PC-9 (cell line): ENCODE measurements at regions of chr20 and their contacts with region 1.

Region 1: GRCh38 chr20:37943501-37944455 is 40.9 kb downstream of the VSTM2L start:
- DNase-seq: no peak
- H3K4me3 ChIP-seq: no peak overlapping the region
- H3K27ac ChIP-seq: no peak overlapping the region
- H3K4me1 ChIP-seq: no peaks in the 10 kb centered on the region
- H3K27me3 ChIP-seq: peaks cover 36% of the 10 kb centered on the region
- CTCF ChIP-seq: no peak

Region 2: DNA sequence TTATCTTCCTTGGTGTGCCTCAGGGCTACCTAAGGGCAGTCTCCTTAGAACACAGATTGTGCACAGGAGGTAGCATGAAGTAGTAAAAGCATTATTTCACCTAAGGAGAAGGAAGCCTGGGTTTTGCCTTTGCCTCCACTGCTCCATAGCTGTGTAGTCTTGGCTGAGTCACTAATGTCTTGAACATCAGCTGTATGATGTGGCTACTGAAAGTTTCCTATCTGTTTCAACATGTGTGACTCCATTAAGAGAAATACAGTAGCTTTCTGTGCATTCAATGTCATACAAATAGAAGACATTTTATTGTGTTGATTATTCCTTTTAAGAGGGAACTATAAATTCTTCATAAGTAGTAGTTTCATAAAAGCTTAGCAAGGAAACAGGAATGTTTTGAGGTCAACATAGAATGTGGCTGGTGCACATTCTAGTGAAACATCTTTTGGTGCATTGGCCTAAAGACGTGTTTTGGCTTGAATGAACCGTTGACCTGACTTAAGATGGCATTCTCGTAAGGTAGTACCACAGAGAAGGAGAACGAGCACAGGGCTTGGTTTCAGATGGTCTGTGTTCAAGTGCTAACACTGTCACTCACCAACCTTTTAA is 179.3 kb before region 1 on chr20:
- CTCF ChIA-PET with region 1: no interaction called
- POLR2A ChIA-PET with region 1: no interaction called
- intact Hi-C with region 1: no loop called
- DNase-seq: no peak
- H3K4me3 ChIP-seq: no peak overlapping the region
- H3K27ac ChIP-seq: no peak overlapping the region
- H3K4me1 ChIP-seq: no peaks in the 10 kb centered on the region
- H3K27me3 ChIP-seq: no peaks in the 10 kb centered on the region
- CTCF ChIP-seq: no peak

Region 3: DNA sequence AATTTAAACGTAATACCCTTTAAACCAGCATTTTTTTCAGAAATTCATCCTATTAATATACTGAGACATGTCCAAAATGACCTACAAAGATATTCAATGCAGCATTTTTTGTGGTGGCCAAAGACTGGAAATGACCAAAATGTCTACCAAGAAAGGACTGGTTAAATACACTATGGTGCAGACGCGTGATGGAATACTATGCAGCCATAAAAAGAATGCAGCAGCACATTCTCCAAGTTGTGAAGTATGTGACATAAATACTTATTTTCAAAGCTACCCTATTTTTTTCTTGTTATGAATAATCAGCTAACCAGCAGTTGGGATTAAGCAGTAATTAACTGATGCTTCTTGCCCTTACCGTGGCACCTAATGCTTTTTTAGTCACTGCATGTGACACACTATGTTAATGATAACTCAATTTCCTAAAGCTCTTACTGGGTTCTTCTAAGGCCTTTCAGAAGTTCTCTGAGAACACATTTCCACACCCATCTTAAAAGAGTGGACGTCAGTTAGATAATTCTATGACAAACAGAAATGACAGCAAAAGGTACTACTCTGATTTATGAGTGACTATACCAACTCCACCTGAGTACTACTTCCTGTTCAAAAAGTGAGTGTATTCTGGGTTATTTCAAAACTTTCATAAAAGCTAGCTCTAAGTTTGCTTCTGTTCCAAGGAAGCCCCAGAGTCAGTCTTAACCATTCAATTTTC is 64.6 kb after region 1 on chr20:
- CTCF ChIA-PET with region 1: interaction called, 13 read pairs
- POLR2A ChIA-PET with region 1: no interaction called
- intact Hi-C with region 1: no loop called
- DNase-seq: no peak
- H3K4me3 ChIP-seq: no peak overlapping the region
- H3K27ac ChIP-seq: no peak overlapping the region
- H3K4me1 ChIP-seq: no peaks in the 10 kb centered on the region
- H3K27me3 ChIP-seq: no peaks in the 10 kb centered on the region
- CTCF ChIP-seq: no peak